RWPE1 (cell line): ENCODE measurements at regions of chr2 and their contacts with region 1.

Region 1: GRCh38 chr2:47767880-47768609 is 14.9 kb upstream of the MSH6 start:
- DNase-seq: peak; percentile 48
- H3K27ac ChIP-seq: no peak overlapping the region
- CTCF ChIP-seq: peak; percentile 98

Region 2: GRCh38 chr2:47437287-47437686 is 330.8 kb before region 1 on chr2:
- CTCF ChIA-PET with region 1: interaction called, 58 read pairs
- POLR2A ChIA-PET with region 1: no interaction called
- DNase-seq: peak; percentile 36
- H3K27ac ChIP-seq: no peak overlapping the region
- CTCF ChIP-seq: peak; percentile 57; the same call in 1 of the 2 replicates

Region 3: GRCh38 chr2:47653902-47654789 is 113.9 kb before region 1 on chr2:
- CTCF ChIA-PET with region 1: no interaction called
- POLR2A ChIA-PET with region 1: no interaction called
- DNase-seq: no peak
- H3K27ac ChIP-seq: no peak overlapping the region
- CTCF ChIP-seq: no peak

Region 4: DNA sequence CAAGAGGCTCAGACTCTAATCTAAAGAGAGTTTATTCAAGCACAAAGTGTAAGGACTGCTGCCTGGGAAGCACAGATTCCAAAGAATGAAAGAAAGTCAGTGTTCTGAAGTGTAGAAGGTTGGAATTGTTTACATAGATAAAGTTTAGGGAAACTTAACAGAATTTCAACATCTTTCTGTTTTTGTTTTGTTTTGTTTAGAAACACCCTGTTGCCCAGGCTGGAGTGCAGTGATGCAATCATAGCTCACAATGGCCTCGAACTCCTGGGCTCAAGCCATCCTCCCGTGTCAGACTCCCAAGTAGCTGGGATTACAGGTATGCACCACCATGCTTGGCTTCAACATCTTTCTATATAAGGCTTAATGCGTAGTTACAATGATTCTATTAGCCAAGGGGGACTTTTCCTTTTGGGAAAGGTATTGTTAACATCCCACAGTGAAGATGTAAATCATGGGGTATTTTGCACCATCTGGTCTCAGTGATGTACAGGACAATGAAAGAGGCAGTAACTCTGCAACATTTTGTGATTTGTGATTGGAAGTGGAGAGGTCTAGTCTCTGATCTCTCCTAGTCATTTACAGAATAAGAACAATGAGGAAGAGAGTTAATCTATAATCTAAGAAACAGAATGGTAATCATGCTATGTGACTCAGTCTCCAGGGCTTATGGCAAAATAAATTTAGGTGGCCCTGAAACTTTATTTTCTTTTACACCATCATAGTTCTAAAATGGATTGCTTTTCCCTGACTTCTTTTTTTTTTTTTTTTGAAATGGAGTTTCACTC is 30.7 kb before region 1 on chr2:
- CTCF ChIA-PET with region 1: no interaction called
- POLR2A ChIA-PET with region 1: no interaction called
- DNase-seq: no peak
- H3K27ac ChIP-seq: no peak overlapping the region
- CTCF ChIP-seq: no peak

Region 5: DNA sequence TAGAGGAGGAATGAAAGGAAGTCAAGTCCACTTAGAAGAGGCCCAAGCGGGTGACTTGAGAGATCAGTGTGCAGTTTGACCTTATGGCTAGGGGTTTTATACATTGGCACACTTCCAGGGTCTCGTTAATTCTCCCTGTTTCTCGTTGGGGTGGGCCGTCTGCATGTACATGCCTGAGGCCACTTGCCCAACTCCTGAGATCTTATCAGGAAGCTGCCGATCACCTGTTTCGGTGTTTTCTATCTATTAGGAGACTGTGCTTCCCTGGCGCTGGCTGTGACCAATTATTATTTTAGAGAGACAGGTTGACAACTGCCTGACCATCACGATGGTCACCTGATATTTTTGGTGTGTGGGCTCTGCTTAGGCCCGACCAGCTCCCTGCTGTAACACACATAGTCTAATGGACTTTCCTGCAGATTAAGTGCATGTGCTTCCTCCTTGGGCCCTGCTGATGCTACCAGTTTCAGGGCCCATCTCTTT is 16.1 kb before region 1 on chr2:
- CTCF ChIA-PET with region 1: interaction called, 10 read pairs
- POLR2A ChIA-PET with region 1: no interaction called
- DNase-seq: no peak
- H3K27ac ChIP-seq: no peak overlapping the region
- CTCF ChIP-seq: no peak

Region 6: GRCh38 chr2:47782671-47783485 is 14.8 kb after region 1 on chr2 and contains the start of gene MSH6:
- CTCF ChIA-PET with region 1: interaction called, 23 read pairs
- POLR2A ChIA-PET with region 1: no interaction called
- DNase-seq: peak; percentile 96
- H3K27ac ChIP-seq: peak within 1 kb of the TSS; percentile 96
- CTCF ChIP-seq: no peak

Region 7: GRCh38 chr2:48279344-48280090 is 511.5 kb after region 1 on chr2:
- CTCF ChIA-PET with region 1: no interaction called
- POLR2A ChIA-PET with region 1: no interaction called
- DNase-seq: no peak
- H3K27ac ChIP-seq: no peak overlapping the region
- CTCF ChIP-seq: no peak